Lower leg skin (tissue), 4 donors: ENCODE measurements at regions of chr5 and their contacts with region 1.

Region 1: DNA sequence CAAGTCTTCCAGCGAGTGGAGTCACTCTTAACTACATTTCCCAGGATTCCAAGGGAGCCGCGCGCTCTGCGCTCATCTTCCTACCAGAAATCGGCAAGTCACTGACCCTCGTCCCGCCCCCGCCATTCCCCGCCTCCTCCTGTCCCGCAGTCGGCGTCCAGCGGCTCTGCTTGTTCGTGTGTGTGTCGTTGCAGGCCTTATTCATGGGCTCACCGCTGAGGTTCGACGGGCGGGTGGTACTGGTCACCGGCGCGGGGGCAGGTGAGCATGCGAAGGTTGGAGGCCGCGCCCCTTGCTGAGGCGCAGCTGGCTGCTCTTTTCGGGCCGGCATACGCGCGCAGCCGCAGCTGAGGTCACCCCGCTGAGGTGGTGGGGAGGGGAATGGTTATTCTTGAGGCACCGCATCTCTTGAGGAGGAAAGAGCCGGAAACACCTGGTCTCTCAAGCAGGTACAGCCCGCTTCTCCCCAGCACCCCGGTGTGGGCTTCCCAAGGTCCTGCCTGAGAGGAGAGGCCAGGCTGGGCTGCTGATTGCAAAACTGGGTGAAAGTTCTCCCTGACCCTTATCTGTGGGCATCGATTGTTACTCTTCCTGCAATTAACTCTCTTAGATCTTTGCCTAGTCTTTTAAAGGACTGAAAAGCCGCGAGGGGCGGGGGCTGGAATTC is at the start of gene HSD17B4:
- DNase-seq: peak; percentile 89 to 98
- H3K4me3 ChIP-seq: peak within 1 kb of the TSS; percentile 77
- CTCF ChIP-seq: no peak
- POLR2A ChIP-seq: no peak
- total RNA-seq, gene HSD17B4: 88.6 to 176 (median 132) TPM

Region 2: DNA sequence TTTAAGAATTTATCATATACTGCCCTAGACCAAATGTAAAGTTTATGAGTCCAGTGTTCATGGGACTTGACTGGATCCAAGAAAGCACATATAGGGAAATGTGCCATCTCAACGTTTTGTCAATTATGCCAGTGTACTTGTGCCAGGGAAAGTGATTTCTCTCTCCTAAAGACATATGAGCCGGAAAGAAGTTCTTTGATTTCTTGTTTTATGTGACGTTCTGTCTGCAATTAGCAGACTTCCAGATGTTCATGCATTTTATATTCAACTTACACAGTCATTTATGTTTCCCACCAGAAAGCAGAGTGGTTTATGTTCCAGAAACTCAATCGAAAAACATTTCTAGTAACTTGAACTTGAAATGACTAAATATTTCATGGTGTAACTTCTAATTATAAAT is 380.7 kb after region 1 on chr5:
- intact Hi-C with region 1: loop called (anchors 5 kb)
- DNase-seq: no peak
- H3K4me3 ChIP-seq: no peak overlapping the region
- CTCF ChIP-seq: no peak
- POLR2A ChIP-seq: no peak

Region 3: DNA sequence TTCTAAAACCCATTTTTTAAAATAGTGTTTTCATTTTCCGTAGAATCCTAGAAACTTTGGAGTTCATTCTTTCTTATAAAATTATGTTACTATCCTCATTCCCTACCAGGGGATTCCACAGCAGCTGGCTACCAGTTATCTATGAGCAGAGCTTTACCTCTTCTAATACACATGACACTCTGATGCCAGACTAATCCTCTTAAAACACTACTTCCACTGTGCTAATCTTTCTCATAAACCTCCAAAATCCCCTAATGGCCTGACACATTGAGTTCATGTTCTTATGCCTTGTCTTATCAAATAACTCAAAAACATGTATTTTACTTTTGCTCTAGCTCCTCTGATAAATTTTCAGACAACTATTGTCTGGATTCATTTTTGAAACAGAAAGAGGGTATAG is 1765.6 kb after region 1 on chr5:
- intact Hi-C with region 1: no loop called
- DNase-seq: no peak
- H3K4me3 ChIP-seq: no peak overlapping the region
- CTCF ChIP-seq: no peak
- POLR2A ChIP-seq: no peak